ENCODE measurements at regions of chr7 and their contacts with region 1.

Region 1: DNA sequence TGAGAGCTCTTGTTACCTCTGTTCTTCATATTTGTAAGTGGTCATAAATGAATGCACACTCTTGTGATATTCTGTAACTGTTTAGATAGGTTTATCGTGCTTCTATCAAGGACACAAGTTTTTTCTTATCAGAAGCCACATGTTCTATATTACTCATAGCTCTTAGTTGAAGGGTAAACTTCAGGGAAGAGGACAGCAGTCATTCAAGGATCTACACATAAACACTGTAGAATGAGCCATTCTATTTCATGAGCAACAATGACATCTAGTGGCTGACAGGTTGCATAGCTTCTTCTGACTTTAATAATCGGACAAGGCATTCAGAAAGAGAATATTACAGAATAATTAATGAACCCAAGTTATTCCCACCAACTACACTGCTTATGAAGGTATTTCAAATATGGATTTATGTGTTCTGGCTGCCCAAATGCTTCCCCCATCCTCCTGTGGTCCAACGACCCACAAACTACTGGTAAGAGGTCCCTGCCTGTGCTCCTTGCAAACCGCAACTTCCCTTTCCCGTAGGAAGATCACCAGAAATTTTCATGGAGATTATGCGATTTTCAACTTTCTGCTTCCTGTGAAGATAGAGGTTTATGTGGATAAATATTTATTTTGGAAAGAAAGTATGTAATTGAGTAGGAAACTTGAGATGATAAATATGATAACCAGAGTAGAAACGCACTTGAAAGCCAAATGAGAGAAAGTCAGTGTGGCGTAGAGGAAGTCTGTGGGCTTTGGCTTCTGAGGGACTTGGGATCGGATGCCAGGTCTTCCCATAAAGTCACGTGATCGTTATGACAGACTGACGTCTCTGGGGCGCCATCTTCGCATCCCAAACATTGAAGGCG is 16.8 kb upstream of the ABCB5 start:
- DNase-seq: peak; percentile 95
- H3K4me3 ChIP-seq: peak overlapping the region in 2 of 3 experiments; percentile 2 to 14
- H3K27ac ChIP-seq: peak overlapping the region; percentile 44
- H3K4me1 ChIP-seq: peaks cover 47% of the 10 kb centered on the region
- H3K27me3 ChIP-seq: no peaks in the 10 kb centered on the region
- CTCF ChIP-seq: peak; percentile 53 to 63
- POLR2A ChIP-seq: no peak

Region 2: DNA sequence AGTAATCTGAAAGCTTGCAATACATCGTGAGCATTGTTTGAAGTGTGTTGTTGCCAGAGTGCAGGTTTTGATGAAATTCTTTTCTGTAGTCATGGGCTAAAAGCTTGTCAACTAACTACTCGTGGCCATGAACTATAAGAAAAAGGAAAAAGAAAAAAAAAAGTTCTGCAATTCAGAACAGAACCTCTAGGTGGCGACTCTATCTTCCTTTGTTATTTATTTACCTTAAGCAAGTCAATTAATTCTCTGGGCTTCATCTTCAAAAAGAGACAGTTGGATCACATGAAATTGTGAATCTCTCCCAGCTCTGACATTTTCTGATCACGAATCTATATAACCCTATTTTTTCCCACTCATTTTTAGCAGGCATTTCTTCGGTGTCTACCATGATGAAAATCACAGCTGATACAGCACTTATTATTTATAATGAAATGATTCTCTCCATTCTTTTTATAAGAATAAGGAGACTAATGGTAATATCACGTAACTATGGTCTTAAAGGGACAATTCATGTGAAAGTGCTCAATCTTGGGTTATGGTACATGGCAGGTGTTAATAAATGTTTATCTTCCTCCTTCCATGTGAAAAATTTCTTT is 844.1 kb before region 1 on chr7:
- CTCF ChIA-PET with region 1: interaction called, 79 read pairs
- POLR2A ChIA-PET with region 1: no interaction called
- dilution Hi-C with region 1: no loop called
- intact Hi-C with region 1: loop called (anchors 1 kb)
- DNase-seq: peak; percentile 75
- H3K4me3 ChIP-seq: no peak overlapping the region
- H3K27ac ChIP-seq: no peak overlapping the region
- H3K4me1 ChIP-seq: no peaks in the 10 kb centered on the region
- H3K27me3 ChIP-seq: no peaks in the 10 kb centered on the region
- CTCF ChIP-seq: peak; percentile 36 to 43
- POLR2A ChIP-seq: no peak

Region 3: DNA sequence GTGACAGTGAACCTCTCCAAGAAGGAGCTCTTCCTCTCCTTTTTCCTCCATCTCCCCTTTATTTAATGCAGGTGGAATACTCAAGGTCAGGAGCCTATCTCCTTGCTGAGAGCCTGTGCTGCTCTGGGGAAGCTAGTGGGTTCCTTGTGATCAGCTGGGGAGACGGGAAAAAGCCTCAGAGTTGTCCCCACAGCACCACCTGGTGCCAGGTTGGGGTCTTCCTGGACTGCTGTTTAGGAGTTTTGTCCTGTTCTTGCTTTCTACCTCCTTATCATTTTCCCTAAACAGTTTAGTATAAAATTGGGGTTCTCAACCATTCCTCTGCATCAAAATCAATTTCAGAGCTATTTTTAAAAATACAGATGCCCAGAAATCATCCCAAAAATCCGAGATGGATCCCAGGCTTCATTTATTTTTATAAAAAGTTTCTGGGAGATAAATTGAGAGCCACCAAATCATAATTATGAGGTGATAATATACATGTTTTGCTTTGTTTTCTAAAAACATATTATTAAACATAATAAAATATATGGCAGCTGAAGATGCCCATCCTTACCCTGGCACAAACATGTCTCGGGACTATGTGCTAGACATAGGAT is 425.8 kb before region 1 on chr7:
- CTCF ChIA-PET with region 1: interaction called, 15 read pairs
- POLR2A ChIA-PET with region 1: no interaction called
- dilution Hi-C with region 1: no loop called
- intact Hi-C with region 1: loop called (anchors 5 kb)
- DNase-seq: peak; percentile 51
- H3K4me3 ChIP-seq: no peak overlapping the region
- H3K27ac ChIP-seq: no peak overlapping the region
- H3K4me1 ChIP-seq: no peaks in the 10 kb centered on the region
- H3K27me3 ChIP-seq: no peaks in the 10 kb centered on the region
- CTCF ChIP-seq: peak; percentile 55 to 66
- POLR2A ChIP-seq: no peak

Region 4: DNA sequence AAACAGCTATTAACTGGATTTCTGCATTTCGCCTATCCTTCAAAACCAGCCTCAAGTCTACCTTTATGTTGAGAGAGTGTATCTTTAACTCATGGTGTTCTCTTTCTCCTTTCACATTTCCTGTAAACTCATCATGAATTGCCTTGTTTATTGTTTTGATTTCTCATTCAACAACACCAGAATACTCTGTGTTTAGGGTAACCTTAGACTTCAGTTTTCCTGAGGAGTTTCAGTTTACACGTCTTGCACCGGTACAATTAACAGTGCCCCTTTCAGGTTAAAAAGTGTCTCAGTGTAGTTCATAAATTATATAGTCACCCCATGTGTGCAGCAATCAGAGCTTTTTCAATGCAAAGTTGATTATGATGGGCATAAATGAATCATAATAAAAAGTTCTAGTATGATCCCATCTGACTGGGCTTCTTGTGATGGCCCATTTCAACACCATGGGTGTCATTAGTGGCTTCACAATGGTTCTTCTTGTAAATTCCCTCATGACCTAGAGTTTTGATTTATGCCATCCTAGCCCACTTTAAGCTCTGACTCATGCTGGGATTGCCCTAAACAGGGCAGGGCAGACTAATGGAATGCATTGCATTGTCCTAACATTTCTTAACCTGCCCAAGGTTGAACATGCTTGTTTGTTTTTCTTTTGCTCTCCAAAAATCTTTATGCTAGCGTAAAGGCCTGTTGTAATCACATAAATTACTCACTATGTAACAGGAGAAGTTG is 245.9 kb before region 1 on chr7:
- CTCF ChIA-PET with region 1: interaction called, 18 read pairs
- POLR2A ChIA-PET with region 1: no interaction called
- dilution Hi-C with region 1: no loop called
- intact Hi-C with region 1: loop called (anchors 1 kb)
- DNase-seq: peak; percentile 73
- H3K4me3 ChIP-seq: no peak overlapping the region
- H3K27ac ChIP-seq: peak overlapping the region; percentile 86
- H3K4me1 ChIP-seq: peaks cover 30% of the 10 kb centered on the region
- H3K27me3 ChIP-seq: no peaks in the 10 kb centered on the region
- CTCF ChIP-seq: no peak
- POLR2A ChIP-seq: no peak

Region 5: DNA sequence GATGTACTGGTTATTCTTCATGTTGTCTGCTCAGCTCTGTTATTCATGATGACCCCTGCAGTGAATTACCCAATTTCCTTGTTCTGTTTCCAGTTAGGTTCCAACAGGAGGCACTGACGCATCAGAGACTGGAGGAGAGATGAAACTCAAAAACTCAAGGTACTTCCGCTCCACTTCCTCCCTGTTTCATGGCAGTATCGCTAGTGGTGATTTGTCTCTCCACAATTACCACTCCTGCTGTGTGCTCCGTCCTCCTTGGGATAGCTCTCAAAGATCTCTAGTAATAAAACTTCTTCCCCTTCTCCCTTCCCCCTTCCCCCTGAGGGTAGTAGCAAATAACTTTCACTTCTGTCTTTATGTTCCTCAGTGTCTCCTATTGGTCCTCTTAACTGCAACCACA is 90.6 kb before region 1 on chr7:
- CTCF ChIA-PET with region 1: interaction called, 26 read pairs
- POLR2A ChIA-PET with region 1: no interaction called
- dilution Hi-C with region 1: no loop called
- intact Hi-C with region 1: loop called (anchors 1 kb)
- DNase-seq: no peak
- H3K4me3 ChIP-seq: no peak overlapping the region
- H3K27ac ChIP-seq: no peak overlapping the region
- H3K4me1 ChIP-seq: peaks cover 25% of the 10 kb centered on the region
- H3K27me3 ChIP-seq: no peaks in the 10 kb centered on the region
- CTCF ChIP-seq: no peak
- POLR2A ChIP-seq: no peak

Region 6: DNA sequence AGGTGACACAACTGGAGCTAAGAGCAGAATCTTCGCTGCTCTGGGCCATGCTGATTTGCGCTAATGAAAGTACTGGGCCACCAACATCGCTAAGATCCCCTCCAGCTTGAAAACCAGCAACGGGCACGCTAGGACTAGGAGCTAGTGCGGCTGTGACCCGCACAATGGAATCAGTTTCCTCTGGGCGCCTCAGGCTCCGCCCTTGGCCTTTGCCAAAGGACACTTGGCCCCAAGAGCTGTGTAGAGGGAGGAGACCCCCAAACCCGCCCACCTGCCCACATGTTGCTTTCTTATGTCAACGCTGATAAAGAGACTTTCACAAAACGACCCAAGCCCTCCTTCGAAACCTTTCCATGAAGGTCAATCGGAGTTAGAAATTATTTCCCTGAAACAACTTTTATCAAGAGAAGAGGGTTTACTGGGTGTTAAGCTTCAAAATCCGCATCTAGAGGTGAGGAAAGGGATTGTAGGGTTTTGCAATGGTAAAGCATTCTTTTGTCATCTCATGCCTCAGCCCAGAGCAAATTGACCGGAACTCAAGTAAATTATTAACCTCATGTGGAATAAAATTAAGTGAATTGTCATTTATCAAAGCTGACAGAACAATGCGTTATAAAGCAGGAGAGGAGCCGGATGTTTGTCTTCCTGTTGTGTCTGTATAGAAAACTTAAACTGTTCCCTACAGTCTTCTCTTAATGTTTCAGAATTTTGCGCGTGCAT is 26.1 kb after region 1 on chr7:
- CTCF ChIA-PET with region 1: no interaction called
- POLR2A ChIA-PET with region 1: no interaction called
- dilution Hi-C with region 1: no loop called
- intact Hi-C with region 1: no loop called
- DNase-seq: no peak
- H3K4me3 ChIP-seq: no peak overlapping the region
- H3K27ac ChIP-seq: no peak overlapping the region
- H3K4me1 ChIP-seq: no peaks in the 10 kb centered on the region
- H3K27me3 ChIP-seq: no peaks in the 10 kb centered on the region
- CTCF ChIP-seq: no peak
- POLR2A ChIP-seq: no peak

Region 7: DNA sequence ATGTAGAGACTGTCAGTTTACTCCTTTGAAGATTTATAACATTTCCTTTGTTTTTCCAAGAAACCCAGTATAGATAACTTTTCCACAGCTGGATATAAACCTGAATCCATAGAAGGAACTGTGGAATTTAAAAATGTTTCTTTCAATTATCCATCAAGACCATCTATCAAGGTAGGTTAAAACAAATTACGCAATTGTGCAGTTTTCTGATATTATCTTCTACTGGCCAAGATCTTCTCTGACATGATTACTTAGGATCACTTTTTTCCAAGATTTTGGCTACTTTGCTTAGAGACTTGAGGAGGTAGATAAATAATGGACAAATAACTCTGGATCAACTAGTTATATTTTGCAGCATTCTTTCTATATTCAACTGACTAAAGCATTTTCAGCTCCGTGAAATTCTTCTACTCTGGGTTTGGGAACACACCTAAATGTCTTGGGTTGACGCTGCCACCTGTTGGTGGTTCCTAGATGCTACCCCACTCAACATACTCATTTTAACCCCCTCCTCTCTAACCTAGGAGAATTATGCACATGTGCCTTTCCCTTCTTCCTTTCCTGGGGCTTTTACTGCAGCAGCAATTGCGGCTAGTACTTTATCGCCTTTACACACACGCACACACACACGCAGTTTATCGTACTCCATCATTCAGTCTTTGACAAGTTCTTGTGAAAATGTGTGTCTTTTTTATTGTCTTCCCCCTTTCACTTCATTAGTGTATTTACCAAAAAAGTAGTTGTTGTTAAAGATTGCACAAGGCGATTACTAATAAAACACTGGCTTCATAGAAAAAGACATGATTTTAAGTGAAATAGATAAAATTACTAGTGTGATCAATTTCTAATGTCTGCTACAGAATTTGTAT is 49.5 kb after region 1 on chr7:
- CTCF ChIA-PET with region 1: interaction called, 28 read pairs
- POLR2A ChIA-PET with region 1: no interaction called
- dilution Hi-C with region 1: no loop called
- intact Hi-C with region 1: loop called (anchors 1 kb)
- DNase-seq: peak; percentile 64
- H3K4me3 ChIP-seq: no peak overlapping the region
- H3K27ac ChIP-seq: no peak overlapping the region
- H3K4me1 ChIP-seq: no peaks in the 10 kb centered on the region
- H3K27me3 ChIP-seq: peaks cover 0 to 4% of the 10 kb centered on the region in 2 experiments
- CTCF ChIP-seq: peak; percentile 54 to 64
- POLR2A ChIP-seq: no peak

Measured in endothelial cell of umbilical vein (primary cell).